ENCODE measurements at regions of chr19 and their contacts with region 1.

Region 1: DNA sequence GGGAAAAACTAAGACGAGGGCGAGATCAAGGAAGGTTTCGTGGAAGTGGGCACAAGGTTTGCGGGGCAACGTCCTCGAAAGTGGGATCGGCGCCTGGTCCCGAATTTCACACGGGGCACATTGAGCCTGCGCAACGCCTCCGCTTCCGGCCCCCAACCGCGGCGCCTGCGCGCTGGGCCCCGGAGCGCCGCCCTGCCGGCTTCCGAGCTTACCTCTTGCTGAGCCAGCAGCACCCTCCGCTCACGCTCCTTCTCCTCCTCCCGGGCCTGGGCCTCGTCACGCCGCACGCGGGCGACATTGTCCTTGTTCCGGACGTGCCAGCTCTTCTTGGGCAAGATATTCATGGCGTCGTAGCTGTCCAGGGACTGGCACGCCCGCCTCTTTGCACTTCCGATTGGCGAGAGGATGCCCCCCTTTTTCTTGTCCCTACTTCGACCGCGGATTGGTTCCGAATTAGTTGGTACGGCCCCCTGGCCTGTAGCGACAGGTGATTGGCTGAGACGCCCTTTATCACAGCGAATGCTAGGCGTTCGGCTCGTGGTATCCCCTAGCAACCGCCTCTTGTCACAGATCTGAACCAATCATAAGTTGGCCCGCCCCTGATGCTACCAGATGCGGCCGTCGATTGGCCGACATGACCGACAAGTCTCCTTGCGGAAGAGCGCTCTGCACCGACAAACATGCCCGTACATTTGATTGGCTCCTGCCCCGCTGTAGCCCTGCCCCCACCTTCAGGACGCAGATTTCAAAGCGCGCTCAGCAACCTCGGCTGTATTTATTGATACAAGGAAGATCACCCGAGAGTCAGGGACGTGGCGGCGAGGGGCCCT is at the start of gene LENG1:
- DNase-seq: peak; percentile 100
- ATAC-seq: peak; percentile 96 to 98
- H3K4me3 ChIP-seq: peak within 1 kb of the TSS; percentile 78 to 87 (median 84)
- H3K27ac ChIP-seq: peak within 1 kb of the TSS; percentile 93 to 98 (median 96)
- H3K4me1 ChIP-seq: peaks cover 23 to 38% of the 10 kb centered on the region in 2 donors
- H3K27me3 ChIP-seq: peaks cover 3 to 8% (median 3%) of the 10 kb centered on the region in 3 donors
- CTCF ChIP-seq: peak in 4 of 5 experiments; percentile 31 to 43 (median 37)
- POLR2A ChIP-seq: peak; percentile 68 to 80
- total RNA-seq, gene LENG1: 6.5 to 14.2 (median 11.9) TPM

Region 2: GRCh38 chr19:54115109-54116063 is 44.2 kb before region 1 on chr19 and contains the starts of genes PRPF31 and TFPT:
- in situ Hi-C with region 1: no loop called
- intact Hi-C with region 1: no loop called
- DNase-seq: peak; percentile 94 to 95
- ATAC-seq: peak; percentile 95 to 97
- H3K4me3 ChIP-seq: peak within 1 kb of the TSS; percentile 69 to 98 (median 91)
- H3K27ac ChIP-seq: peak within 1 kb of the TSS; percentile 87 to 99 (median 90)
- H3K4me1 ChIP-seq: peaks cover 21% of the 10 kb centered on the region in 2 donors
- H3K27me3 ChIP-seq: no peaks in the 10 kb centered on the region
- CTCF ChIP-seq: peak in 1 of 5 experiments; percentile 24
- POLR2A ChIP-seq: peak; percentile 63 to 76
- total RNA-seq, gene PRPF31: 26.6 to 39.4 (median 37.2) TPM
- total RNA-seq, gene TFPT: 7.5 to 18.1 (median 17.5) TPM

Region 3: DNA sequence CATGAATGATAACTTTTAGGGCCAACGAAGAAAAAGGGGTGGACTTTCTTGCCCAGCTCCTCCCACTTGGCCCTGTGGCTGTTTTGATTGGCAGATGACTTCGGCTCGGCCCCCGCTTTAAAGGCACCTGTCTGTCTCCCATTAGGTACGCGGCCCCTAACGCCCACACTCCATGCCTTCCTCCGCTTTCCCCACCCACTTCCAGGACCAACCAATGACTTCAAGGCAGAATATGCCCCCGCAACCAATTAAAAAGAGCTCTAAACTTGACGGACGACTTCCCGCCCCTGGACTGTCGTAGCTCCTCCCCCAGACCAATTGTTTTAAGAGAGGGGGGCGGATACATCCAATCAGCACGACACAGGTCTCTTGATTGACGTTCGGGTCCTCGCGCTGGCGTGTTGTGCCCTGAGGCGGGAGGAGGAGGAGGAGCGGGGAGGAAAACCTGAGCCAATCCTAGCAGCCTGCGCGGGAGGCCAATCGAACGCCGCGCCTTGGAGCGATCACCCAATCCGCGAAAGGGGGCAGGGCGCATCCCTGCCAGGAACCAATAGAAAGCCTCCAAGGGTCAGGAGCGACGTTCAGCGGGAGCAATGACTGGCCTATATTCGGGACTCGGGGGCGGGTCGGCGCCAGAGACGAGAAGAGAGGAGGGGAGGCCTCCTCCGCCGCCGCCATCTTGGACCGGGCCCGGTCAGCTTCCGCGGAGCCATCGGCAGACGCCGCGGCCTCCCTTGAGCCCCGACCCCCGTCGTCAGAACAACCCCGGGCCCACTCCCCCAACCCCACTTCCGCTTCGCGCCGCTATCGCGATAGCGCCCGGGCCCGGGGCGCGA is 22.3 kb before region 1 on chr19 and contains the start of gene CNOT3:
- in situ Hi-C with region 1: no loop called
- intact Hi-C with region 1: loop called (anchors 1 kb)
- DNase-seq: peak; percentile 100
- ATAC-seq: peak; percentile 90 to 94
- H3K4me3 ChIP-seq: peak within 1 kb of the TSS; percentile 86 to 99 (median 92)
- H3K27ac ChIP-seq: peak within 1 kb of the TSS; percentile 97 to 100 (median 98)
- H3K4me1 ChIP-seq: peaks cover 29 to 44% of the 10 kb centered on the region in 2 donors
- H3K27me3 ChIP-seq: no peaks in the 10 kb centered on the region
- CTCF ChIP-seq: no peak
- POLR2A ChIP-seq: peak; percentile 94 to 98
- total RNA-seq, gene CNOT3: 5.1 to 14.0 (median 10.2) TPM

Region 4: DNA sequence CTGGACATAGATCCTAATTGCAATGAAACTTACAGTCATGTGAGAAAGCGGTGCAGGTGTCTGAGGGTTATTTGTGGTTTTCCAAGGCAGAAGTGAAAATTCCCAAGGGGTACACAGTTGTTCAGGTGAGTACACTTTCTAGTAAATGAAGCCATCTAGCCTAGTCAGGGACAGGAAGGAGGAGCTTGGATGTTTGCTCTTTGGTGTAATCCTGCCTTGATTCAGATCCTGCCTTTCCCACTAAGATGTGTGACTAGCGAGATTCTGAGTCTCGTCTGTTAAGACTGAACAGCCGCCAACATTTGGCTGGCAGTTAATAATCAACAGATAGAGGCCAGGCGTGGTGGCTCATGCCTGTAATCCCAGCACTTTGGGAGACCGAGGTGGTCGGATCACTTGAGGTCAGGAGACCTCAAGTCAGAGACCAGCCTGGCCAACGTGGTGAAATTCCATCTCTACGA is 43.6 kb after region 1 on chr19:
- in situ Hi-C with region 1: no loop called
- intact Hi-C with region 1: loop called (anchors 5 kb)
- DNase-seq: no peak
- ATAC-seq: no peak
- H3K4me3 ChIP-seq: peak overlapping the region in 2 of 4 donors; percentile 76 to 78
- H3K27ac ChIP-seq: peak overlapping the region; percentile 63 to 95 (median 92)
- H3K4me1 ChIP-seq: peaks cover 60 to 63% of the 10 kb centered on the region in 2 donors
- H3K27me3 ChIP-seq: no peaks in the 10 kb centered on the region
- CTCF ChIP-seq: no peak
- POLR2A ChIP-seq: no peak

Region 5: GRCh38 chr19:54231077-54231931 is 71.7 kb after region 1 on chr19:
- in situ Hi-C with region 1: loop called in 1 of 4 experiments (anchors 5 kb)
- intact Hi-C with region 1: no loop called
- DNase-seq: peak; percentile 34 to 52
- ATAC-seq: peak; percentile 47 to 85
- H3K4me3 ChIP-seq: no peak overlapping the region
- H3K27ac ChIP-seq: no peak overlapping the region
- H3K4me1 ChIP-seq: no peaks in the 10 kb centered on the region
- H3K27me3 ChIP-seq: peaks cover 0 to 6% (median 5%) of the 10 kb centered on the region in 3 donors
- CTCF ChIP-seq: peak; percentile 62 to 87 (median 81)
- POLR2A ChIP-seq: no peak

Region 6: DNA sequence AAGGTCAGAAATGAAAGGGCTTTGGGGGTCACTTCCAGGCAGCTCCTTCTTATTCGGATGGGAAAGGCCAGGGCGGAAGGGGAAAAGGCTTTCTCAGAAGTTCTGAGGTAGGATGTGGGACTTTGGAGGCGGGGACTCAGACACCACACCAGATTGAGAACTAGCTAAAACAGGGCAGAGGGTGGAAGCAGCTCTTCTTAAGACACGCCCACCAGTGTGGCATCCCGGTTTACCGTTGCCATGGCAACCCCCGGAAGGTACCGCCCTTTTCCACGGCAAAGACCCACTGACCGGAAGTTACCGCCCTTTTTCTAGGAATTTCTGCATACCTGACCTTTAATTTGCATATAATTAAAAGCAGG is 157.2 kb after region 1 on chr19:
- in situ Hi-C with region 1: no loop called
- intact Hi-C with region 1: no loop called
- DNase-seq: no peak
- ATAC-seq: no peak
- H3K4me3 ChIP-seq: no peak overlapping the region
- H3K27ac ChIP-seq: no peak overlapping the region
- H3K4me1 ChIP-seq: no peaks in the 10 kb centered on the region
- H3K27me3 ChIP-seq: no peaks in the 10 kb centered on the region
- CTCF ChIP-seq: no peak
- POLR2A ChIP-seq: no peak